ENCODE measurements at regions of chr5 and their contacts with region 1.

Region 1: DNA sequence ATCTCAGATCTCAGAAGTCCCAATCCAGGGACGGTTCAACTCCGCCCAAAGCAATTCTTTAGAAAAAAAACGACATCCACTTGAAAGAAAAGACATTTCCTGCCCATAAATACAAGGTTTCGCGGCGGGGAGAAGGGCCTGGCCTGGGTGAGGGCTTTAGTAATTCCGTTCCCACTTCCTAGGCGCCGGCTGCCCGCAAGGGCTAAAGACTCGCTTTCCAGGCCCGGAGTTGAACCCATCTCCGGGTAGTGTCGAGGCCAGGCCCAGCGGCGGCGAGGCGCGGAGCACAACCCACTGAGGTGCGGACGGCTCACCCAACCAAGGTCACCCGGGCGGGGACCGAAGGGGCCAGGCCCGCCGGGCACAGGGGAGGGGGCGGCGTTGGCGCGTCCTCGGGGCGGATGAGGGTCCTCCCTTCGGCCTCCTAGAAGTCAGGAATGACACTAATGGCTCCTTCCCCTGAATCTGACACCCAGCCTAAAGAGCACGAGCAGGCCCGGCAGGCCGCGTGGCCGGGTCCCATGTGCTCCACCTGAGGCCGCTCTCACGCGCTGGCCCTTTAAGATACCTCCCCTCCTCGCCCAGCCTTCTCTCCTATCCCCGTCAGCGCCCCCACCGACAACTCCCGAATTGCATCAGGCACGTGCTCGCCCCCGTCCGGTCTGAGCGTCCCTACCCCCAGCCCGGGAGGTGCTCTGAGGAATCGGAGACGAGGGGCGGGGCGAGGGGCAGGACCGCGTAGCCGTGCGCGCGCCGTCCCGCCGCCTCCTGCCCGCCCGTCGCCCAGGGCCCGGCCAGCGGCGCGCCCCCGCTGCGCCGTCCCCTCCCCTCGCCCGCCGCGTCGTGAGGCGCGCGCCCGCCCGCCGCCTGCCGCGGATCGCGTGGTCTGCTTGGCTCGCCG is 467 bp upstream of the LARP1 start:
- DNase-seq: peak; percentile 98 to 100 (median 99)
- ATAC-seq: peak; percentile 86
- H3K4me3 ChIP-seq: peak overlapping the region; percentile 72
- H3K4me3 Mint-ChIP-seq: peak overlapping the region; percentile 90
- H3K27ac ChIP-seq: peak overlapping the region; percentile 86 to 92
- H3K27ac Mint-ChIP-seq: peak overlapping the region; percentile 93
- H3K4me1 ChIP-seq: peaks cover 26% of the 10 kb centered on the region
- H3K4me1 Mint-ChIP-seq: peaks cover 50% of the 10 kb centered on the region
- H3K27me3 ChIP-seq: no peaks in the 10 kb centered on the region
- H3K27me3 Mint-ChIP-seq: no peaks in the 10 kb centered on the region
- CTCF ChIP-seq: peak; percentile 50

Region 2: GRCh38 chr5:153551537-153552079 is 1203.1 kb before region 1 on chr5:
- CTCF ChIA-PET with region 1: no interaction called
- POLR2A ChIA-PET with region 1: no interaction called
- intact Hi-C with region 1: no loop called
- DNase-seq: no peak
- ATAC-seq: no peak
- H3K4me3 ChIP-seq: no peak overlapping the region
- H3K4me3 Mint-ChIP-seq: no peak overlapping the region
- H3K27ac ChIP-seq: no peak overlapping the region
- H3K27ac Mint-ChIP-seq: no peak overlapping the region
- H3K4me1 ChIP-seq: no peaks in the 10 kb centered on the region
- H3K4me1 Mint-ChIP-seq: peaks cover 17% of the 10 kb centered on the region
- H3K27me3 ChIP-seq: no peaks in the 10 kb centered on the region
- H3K27me3 Mint-ChIP-seq: peaks cover 4% of the 10 kb centered on the region
- CTCF ChIP-seq: no peak

Region 3: GRCh38 chr5:154445422-154446182 is 309.1 kb before region 1 on chr5 and contains the start of gene SAP30L:
- CTCF ChIA-PET with region 1: no interaction called
- POLR2A ChIA-PET with region 1: no interaction called
- intact Hi-C with region 1: loop called in 1 of 2 experiments (anchors 5 kb)
- DNase-seq: peak; percentile 90 to 97 (median 94)
- ATAC-seq: peak; percentile 94
- H3K4me3 ChIP-seq: peak within 1 kb of the TSS; percentile 79
- H3K4me3 Mint-ChIP-seq: peak within 1 kb of the TSS; percentile 97
- H3K27ac ChIP-seq: peak within 1 kb of the TSS; percentile 42 to 73
- H3K27ac Mint-ChIP-seq: peak within 1 kb of the TSS; percentile 89
- H3K4me1 ChIP-seq: peaks cover 38% of the 10 kb centered on the region
- H3K4me1 Mint-ChIP-seq: peaks cover 69% of the 10 kb centered on the region
- H3K27me3 ChIP-seq: no peaks in the 10 kb centered on the region
- H3K27me3 Mint-ChIP-seq: no peaks in the 10 kb centered on the region
- CTCF ChIP-seq: no peak
- total RNA-seq, gene SAP30L: 32.2 to 33.6 TPM

Region 4: GRCh38 chr5:154654486-154655371 is 100.0 kb before region 1 on chr5:
- CTCF ChIA-PET with region 1: interaction called, 5 read pairs
- POLR2A ChIA-PET with region 1: interaction called, 3 read pairs
- intact Hi-C with region 1: loop called (anchors 2 to 5 kb)
- DNase-seq: no peak
- ATAC-seq: no peak
- H3K4me3 ChIP-seq: no peak overlapping the region
- H3K4me3 Mint-ChIP-seq: no peak overlapping the region
- H3K27ac ChIP-seq: no peak overlapping the region
- H3K27ac Mint-ChIP-seq: no peak overlapping the region
- H3K4me1 ChIP-seq: peaks cover 9% of the 10 kb centered on the region
- H3K4me1 Mint-ChIP-seq: peaks cover 10% of the 10 kb centered on the region
- H3K27me3 ChIP-seq: no peaks in the 10 kb centered on the region
- H3K27me3 Mint-ChIP-seq: peaks cover 5% of the 10 kb centered on the region
- CTCF ChIP-seq: no peak

Region 5: GRCh38 chr5:154767576-154767975 is 12.9 kb after region 1 on chr5:
- CTCF ChIA-PET with region 1: interaction called, 4 read pairs
- POLR2A ChIA-PET with region 1: interaction called, 23 read pairs
- intact Hi-C with region 1: loop called in 1 of 2 experiments (anchors 1 kb)
- DNase-seq: peak in 2 of 14 experiments; percentile 18 to 30
- ATAC-seq: peak; percentile 78
- H3K4me3 ChIP-seq: no peak overlapping the region
- H3K4me3 Mint-ChIP-seq: peak overlapping the region; percentile 55
- H3K27ac ChIP-seq: no peak overlapping the region
- H3K27ac Mint-ChIP-seq: peak overlapping the region; percentile 57
- H3K4me1 ChIP-seq: peaks cover 84% of the 10 kb centered on the region
- H3K4me1 Mint-ChIP-seq: peaks cover 73% of the 10 kb centered on the region
- H3K27me3 ChIP-seq: no peaks in the 10 kb centered on the region
- H3K27me3 Mint-ChIP-seq: no peaks in the 10 kb centered on the region
- CTCF ChIP-seq: no peak

Region 6: DNA sequence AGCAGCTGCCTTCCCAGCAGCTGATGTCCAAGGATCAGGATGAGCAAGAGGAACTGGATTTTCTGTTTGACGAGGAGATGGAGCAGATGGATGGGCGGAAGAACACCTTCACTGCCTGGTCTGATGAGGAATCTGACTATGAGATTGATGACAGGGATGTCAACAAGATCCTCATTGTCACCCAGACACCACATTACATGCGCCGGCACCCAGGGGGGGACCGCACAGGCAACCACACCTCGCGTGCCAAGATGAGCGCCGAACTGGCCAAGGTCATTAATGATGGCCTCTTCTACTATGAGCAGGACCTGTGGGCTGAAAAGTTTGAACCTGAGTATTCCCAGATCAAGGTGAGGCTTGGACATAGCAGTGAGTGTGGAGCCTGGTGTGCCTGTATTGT is 47.3 kb after region 1 on chr5:
- CTCF ChIA-PET with region 1: no interaction called
- POLR2A ChIA-PET with region 1: interaction called, 5 read pairs
- intact Hi-C with region 1: loop called in 1 of 2 experiments (anchors 5 kb)
- DNase-seq: no peak
- ATAC-seq: no peak
- H3K4me3 ChIP-seq: no peak overlapping the region
- H3K4me3 Mint-ChIP-seq: no peak overlapping the region
- H3K27ac ChIP-seq: no peak overlapping the region
- H3K27ac Mint-ChIP-seq: peak overlapping the region; percentile 43
- H3K4me1 ChIP-seq: no peaks in the 10 kb centered on the region
- H3K4me1 Mint-ChIP-seq: no peaks in the 10 kb centered on the region
- H3K27me3 ChIP-seq: no peaks in the 10 kb centered on the region
- H3K27me3 Mint-ChIP-seq: no peaks in the 10 kb centered on the region
- CTCF ChIP-seq: no peak

Region 7: DNA sequence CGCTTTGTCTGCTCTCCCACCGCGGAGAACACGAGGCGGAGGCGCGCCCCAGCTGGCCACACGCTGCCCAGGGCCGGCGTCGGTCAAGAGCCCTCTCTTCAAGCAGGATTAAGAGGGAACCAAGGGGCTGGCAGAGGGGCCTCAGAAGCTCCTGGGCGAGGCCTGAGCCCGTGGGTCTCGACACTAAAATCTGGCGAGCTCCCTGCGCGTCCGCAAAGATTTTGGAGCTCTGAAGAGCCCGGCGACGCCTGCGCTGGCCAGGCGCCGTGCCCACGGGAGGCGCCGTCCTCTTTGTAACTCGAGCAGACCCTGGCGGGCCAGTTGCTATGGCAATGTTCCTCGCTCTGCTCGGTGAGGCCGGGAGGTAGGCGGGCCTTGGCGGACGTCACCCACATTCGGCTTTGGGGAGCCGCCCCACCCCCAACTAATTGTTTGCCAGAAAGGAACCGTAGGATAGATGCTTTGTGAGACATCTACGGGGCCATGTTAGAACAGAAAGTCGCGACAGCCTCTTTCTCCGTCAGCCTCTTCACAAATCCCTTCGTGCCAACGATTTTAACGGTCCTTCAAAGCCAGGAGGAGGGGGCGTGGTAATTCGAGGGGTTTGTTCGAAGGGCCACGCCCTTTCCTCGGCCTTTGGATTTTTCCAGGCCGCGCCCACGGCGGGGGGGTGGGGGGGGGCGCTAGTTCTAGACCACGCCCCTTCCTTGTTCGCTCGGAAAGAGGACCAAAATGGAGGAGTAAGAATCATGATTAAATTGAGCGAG is 103.0 kb after region 1 on chr5:
- CTCF ChIA-PET with region 1: no interaction called
- POLR2A ChIA-PET with region 1: interaction called, 17 read pairs
- intact Hi-C with region 1: loop called (anchors 1 kb)
- DNase-seq: peak; percentile 77 to 96 (median 86)
- ATAC-seq: peak; percentile 53
- H3K4me3 ChIP-seq: peak overlapping the region; percentile 73
- H3K4me3 Mint-ChIP-seq: peak overlapping the region; percentile 92
- H3K27ac ChIP-seq: peak overlapping the region; percentile 96 to 98
- H3K27ac Mint-ChIP-seq: peak overlapping the region; percentile 98
- H3K4me1 ChIP-seq: peaks cover 28% of the 10 kb centered on the region
- H3K4me1 Mint-ChIP-seq: peaks cover 46% of the 10 kb centered on the region
- H3K27me3 ChIP-seq: no peaks in the 10 kb centered on the region
- H3K27me3 Mint-ChIP-seq: no peaks in the 10 kb centered on the region
- CTCF ChIP-seq: no peak

Region 8: DNA sequence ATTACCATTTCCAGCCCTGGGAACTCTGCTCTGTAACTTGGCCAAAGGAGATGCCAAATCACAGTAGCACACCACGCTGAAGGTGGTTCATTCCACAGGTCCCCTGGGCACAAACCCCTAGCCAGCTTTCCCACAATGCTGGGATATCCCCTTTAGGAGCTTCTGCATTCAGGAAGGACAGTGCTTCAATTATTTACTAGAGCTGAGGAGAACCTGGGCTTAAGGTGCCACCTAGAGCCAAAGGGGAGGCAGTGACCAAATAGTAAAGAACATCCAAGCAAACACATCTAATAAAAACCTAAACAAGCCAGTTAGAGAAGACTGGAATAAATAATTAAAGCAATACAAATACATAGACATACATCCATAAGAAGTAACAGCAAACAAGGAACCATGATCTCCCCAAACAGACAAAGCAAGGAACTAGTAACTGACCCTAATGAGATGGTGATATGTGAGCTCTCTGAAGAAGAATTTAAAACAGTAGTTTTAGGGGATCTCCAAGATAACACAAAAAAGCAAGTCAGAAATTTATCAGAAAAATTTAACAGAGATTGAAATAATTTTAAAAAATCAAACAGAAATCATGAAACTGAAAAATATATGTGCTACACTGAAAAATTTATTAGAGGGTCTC is 273.4 kb after region 1 on chr5:
- CTCF ChIA-PET with region 1: no interaction called
- POLR2A ChIA-PET with region 1: no interaction called
- intact Hi-C with region 1: no loop called
- DNase-seq: no peak
- ATAC-seq: no peak
- H3K4me3 ChIP-seq: no peak overlapping the region
- H3K4me3 Mint-ChIP-seq: no peak overlapping the region
- H3K27ac ChIP-seq: no peak overlapping the region
- H3K27ac Mint-ChIP-seq: no peak overlapping the region
- H3K4me1 ChIP-seq: no peaks in the 10 kb centered on the region
- H3K4me1 Mint-ChIP-seq: no peaks in the 10 kb centered on the region
- H3K27me3 ChIP-seq: peaks cover 5% of the 10 kb centered on the region in 2 experiments
- H3K27me3 Mint-ChIP-seq: peaks cover 23% of the 10 kb centered on the region
- CTCF ChIP-seq: no peak